Heart left ventricle (tissue), 16 donors: ENCODE measurements at regions of chr1 and their contacts with region 1.

Region 1: GRCh38 chr1:243255791-243256512 is at the start of gene SDCCAG8:
- DNase-seq: peak; percentile 96 to 99 (median 99)
- ATAC-seq: peak; percentile 93 to 96 (median 96)
- H3K4me3 ChIP-seq: peak within 1 kb of the TSS; percentile 72 to 100 (median 84)
- H3K27ac ChIP-seq: peak within 1 kb of the TSS; percentile 93 to 98 (median 96)
- H3K4me1 ChIP-seq: peaks cover 0 to 66% (median 34%) of the 10 kb centered on the region in 12 donors
- H3K27me3 ChIP-seq: no peaks in the 10 kb centered on the region
- CTCF ChIP-seq: no peak
- POLR2A ChIP-seq: peak in 1 of 2 donors; percentile 87
- total RNA-seq, gene SDCCAG8: 16.7 to 36.6 (median 23.6) TPM

Region 2: DNA sequence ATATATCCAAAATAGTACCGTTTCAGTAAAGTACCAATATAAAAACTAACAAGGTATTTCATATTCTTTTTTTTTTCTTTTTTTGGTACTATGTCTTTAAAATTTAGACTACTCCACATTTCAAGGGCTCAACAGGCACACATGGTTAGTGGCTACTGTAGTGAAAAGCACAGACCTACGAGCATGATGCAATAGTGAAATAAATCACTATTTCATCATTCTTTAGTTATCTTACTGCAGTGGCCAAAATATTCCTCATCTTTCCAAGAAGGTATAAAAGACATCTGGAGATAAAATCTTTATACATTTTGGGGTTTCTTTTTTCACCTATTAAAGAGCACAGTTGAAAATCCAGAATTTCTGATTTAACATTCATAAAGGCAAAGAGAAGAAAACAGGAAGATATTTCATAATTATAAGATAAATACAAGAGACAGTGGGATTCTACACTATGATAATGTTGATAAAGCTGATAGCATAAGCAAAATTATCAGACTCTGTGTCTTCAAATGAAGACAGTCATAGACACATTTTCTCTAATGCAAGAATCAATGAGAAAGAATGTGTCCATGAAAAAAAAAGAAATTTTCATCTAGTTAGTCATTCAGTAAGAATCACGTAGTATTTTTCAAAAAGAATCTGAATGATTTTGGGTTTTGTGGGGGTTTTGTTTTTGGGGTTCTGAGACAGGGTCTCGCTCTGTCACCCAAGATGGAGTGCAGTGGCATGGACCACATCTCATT is 42.7 kb before region 1 on chr1:
- intact Hi-C with region 1: loop called in 1 of 10 experiments (anchors 5 kb)
- DNase-seq: no peak
- ATAC-seq: peak in 3 of 4 donors; percentile 64 to 77 (median 75)
- H3K4me3 ChIP-seq: no peak overlapping the region
- H3K27ac ChIP-seq: peak overlapping the region in 6 of 12 donors; percentile 3 to 44 (median 22)
- H3K4me1 ChIP-seq: peaks cover 0 to 22% (median 14%) of the 10 kb centered on the region in 12 donors
- H3K27me3 ChIP-seq: no peaks in the 10 kb centered on the region
- CTCF ChIP-seq: no peak
- POLR2A ChIP-seq: no peak